Prostate gland (tissue), 2 donors: ENCODE measurements at regions of chr7 and their contacts with region 1.

Region 1: GRCh38 chr7:5450549-5451372 is 27.1 kb upstream of the TNRC18 start:
- DNase-seq: peak; percentile 56
- H3K4me3 ChIP-seq: no peak overlapping the region
- H3K27ac ChIP-seq: peak overlapping the region; percentile 32 to 33
- H3K4me1 ChIP-seq: peaks cover 4% of the 10 kb centered on the region
- H3K27me3 ChIP-seq: no peaks in the 10 kb centered on the region
- CTCF ChIP-seq: peak; percentile 62 to 81 (median 73)
- POLR2A ChIP-seq: no peak

Region 2: DNA sequence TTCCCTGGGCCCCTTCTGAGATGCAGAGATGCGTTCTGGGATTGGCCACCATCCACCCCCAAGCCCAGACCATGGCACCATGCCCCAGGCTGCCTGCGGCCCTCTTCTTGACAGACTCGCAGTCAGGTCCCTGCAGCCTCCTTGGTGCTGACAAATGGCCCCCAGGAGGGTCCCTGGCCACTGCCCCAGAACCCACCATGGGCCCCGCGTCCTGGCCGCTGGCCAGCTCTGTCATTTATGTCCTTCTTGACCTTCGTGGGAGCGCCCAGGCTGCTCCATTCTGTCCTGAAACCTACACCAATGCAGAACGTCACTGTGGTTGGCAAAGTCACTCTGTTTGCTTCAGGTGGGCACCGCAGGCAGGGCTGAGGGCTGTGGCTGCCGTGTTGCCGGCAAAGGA is 207.5 kb before region 1 on chr7:
- intact Hi-C with region 1: loop called (anchors 5 kb)
- DNase-seq: no peak
- H3K4me3 ChIP-seq: no peak overlapping the region
- H3K27ac ChIP-seq: no peak overlapping the region
- H3K4me1 ChIP-seq: no peaks in the 10 kb centered on the region
- H3K27me3 ChIP-seq: no peaks in the 10 kb centered on the region
- CTCF ChIP-seq: no peak
- POLR2A ChIP-seq: no peak

Region 3: DNA sequence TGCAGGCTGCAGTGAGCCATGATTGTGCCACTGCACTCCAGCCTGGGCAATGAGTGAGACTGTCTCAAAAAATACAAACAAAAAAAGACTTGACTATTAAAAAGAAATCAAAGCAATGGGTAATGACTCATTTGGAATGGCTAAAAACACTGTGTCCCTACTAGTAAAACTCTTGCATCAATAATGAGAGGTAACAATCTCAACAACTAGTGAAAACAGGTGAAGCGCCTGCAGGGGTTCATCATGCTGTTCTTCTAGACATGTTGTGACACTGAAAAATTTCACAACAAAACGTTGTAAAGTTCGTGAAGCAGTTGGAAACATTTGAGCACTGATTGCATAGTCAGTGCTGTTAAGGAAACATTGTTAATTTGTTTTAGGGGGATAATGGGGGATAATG is 194.9 kb before region 1 on chr7:
- intact Hi-C with region 1: no loop called
- DNase-seq: no peak
- H3K4me3 ChIP-seq: no peak overlapping the region
- H3K27ac ChIP-seq: no peak overlapping the region
- H3K4me1 ChIP-seq: no peaks in the 10 kb centered on the region
- H3K27me3 ChIP-seq: no peaks in the 10 kb centered on the region
- CTCF ChIP-seq: no peak
- POLR2A ChIP-seq: no peak

Region 4: GRCh38 chr7:5363729-5364128 is 87.0 kb before region 1 on chr7:
- intact Hi-C with region 1: loop called (anchors 5 kb)
- DNase-seq: no peak
- H3K4me3 ChIP-seq: no peak overlapping the region
- H3K27ac ChIP-seq: no peak overlapping the region
- H3K4me1 ChIP-seq: peaks cover 14% of the 10 kb centered on the region
- H3K27me3 ChIP-seq: no peaks in the 10 kb centered on the region
- CTCF ChIP-seq: no peak
- POLR2A ChIP-seq: no peak

Region 5: GRCh38 chr7:5580714-5581395 is 130.1 kb after region 1 on chr7:
- intact Hi-C with region 1: no loop called
- DNase-seq: no peak
- H3K4me3 ChIP-seq: no peak overlapping the region
- H3K27ac ChIP-seq: no peak overlapping the region
- H3K4me1 ChIP-seq: no peaks in the 10 kb centered on the region
- H3K27me3 ChIP-seq: no peaks in the 10 kb centered on the region
- CTCF ChIP-seq: no peak
- POLR2A ChIP-seq: no peak